Activated CD4-positive, alpha-beta memory T cell treated with anti-CD3 and anti-CD28 coated beads for 36 hours (primary cell): ENCODE measurements at regions of chr12 and their contacts with region 1.

Region 1: GRCh38 chr12:124992874-124993625 is 395 bp upstream of the BRI3BP start:
- DNase-seq: peak; percentile 94
- H3K4me3 Mint-ChIP-seq: peak overlapping the region; percentile 79
- H3K27ac Mint-ChIP-seq: peak overlapping the region; percentile 90
- H3K4me1 Mint-ChIP-seq: peaks cover 29% of the 10 kb centered on the region
- H3K27me3 Mint-ChIP-seq: no peaks in the 10 kb centered on the region

Region 2: GRCh38 chr12:124863416-124864325 is 129.4 kb before region 1 on chr12 and contains the start of gene SCARB1:
- CTCF ChIA-PET with region 1: no interaction called
- POLR2A ChIA-PET with region 1: no interaction called
- intact Hi-C with region 1: loop called (anchors 5 kb)
- DNase-seq: peak; percentile 88
- H3K4me3 Mint-ChIP-seq: peak within 1 kb of the TSS; percentile 71
- H3K27ac Mint-ChIP-seq: peak within 1 kb of the TSS; percentile 44
- H3K4me1 Mint-ChIP-seq: peaks cover 18% of the 10 kb centered on the region
- H3K27me3 Mint-ChIP-seq: peaks cover 3% of the 10 kb centered on the region
- total RNA-seq, gene SCARB1: 11.4 to 12.8 TPM

Region 3: GRCh38 chr12:124927201-124928094 is 65.6 kb before region 1 on chr12:
- CTCF ChIA-PET with region 1: no interaction called
- POLR2A ChIA-PET with region 1: no interaction called
- intact Hi-C with region 1: loop called (anchors 1 kb)
- DNase-seq: peak; percentile 97
- H3K4me3 Mint-ChIP-seq: peak overlapping the region; percentile 94
- H3K27ac Mint-ChIP-seq: peak overlapping the region; percentile 96
- H3K4me1 Mint-ChIP-seq: peaks cover 32% of the 10 kb centered on the region
- H3K27me3 Mint-ChIP-seq: peaks cover 5% of the 10 kb centered on the region

Region 4: DNA sequence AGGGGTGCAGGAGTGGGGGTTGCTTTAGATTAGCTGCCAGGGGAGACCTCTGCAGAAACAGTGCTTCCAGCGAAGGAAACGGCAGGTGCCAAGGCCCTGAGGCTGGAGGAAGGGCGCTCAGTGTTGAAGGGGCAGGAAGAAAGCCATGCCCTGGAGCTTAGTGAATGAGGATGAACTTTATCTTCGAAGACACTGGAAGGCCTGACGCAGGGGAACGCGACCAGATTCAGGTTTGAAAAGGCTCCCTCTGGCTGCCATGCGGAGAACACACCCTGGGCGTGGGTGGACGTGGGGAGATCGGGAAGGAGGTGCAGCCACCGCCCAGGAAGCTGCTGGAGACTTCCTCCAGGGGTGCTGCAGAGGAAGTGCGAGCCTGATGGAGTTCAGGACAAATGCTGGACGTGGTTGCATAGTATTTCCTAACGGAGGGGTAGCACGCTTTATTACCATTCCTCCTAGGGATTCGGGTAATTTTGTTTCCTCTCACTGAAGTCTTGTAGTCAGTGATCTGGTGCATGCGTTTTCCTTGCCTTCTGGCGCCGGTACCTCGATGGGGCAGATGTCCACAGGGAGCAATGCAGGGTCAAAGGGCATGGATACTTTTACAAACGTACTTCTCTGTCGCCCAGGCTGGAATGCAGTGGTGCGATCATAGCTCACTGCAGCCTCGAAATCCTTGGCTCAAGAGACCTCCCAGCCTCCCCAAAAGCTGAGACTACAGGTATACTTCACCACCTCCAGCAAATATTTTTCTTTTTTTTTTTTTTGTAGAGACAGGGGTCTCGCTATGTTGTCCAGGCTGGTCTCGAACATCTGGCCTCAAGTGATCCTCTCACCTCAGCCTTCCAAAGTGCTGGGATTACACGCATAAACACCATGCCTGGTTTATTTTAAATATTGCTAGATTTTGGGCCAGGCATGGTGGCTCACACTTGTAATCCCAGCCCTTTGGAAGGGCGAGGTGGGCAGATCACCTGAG is 52.2 kb before region 1 on chr12:
- CTCF ChIA-PET with region 1: interaction called, 27 read pairs
- POLR2A ChIA-PET with region 1: interaction called, 3 read pairs
- intact Hi-C with region 1: loop called (anchors 1 kb)
- DNase-seq: peak; percentile 95
- H3K4me3 Mint-ChIP-seq: no peak overlapping the region
- H3K27ac Mint-ChIP-seq: no peak overlapping the region
- H3K4me1 Mint-ChIP-seq: peaks cover 10% of the 10 kb centered on the region
- H3K27me3 Mint-ChIP-seq: no peaks in the 10 kb centered on the region

Region 5: GRCh38 chr12:124952801-124953200 is 40.2 kb before region 1 on chr12:
- CTCF ChIA-PET with region 1: no interaction called
- POLR2A ChIA-PET with region 1: no interaction called
- intact Hi-C with region 1: no loop called
- DNase-seq: no peak
- H3K4me3 Mint-ChIP-seq: no peak overlapping the region
- H3K27ac Mint-ChIP-seq: no peak overlapping the region
- H3K4me1 Mint-ChIP-seq: no peaks in the 10 kb centered on the region
- H3K27me3 Mint-ChIP-seq: no peaks in the 10 kb centered on the region

Region 6: DNA sequence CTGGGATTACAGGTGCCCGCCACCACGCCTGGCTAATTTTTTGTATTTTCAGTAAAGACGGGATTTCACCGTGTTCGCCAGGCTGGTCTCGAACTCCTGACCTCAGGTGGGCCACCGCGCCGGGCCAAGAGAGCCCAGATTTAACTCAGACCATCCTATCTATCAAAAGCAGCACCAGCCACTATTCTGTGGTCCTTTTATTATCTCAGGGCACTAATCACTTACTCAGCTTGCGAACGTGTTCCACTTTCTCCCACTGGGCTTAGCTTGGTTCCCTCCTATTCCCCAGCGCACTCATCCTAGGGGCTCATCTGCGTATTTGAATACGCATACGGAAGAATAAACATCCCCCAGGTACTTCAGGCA is 56.0 kb after region 1 on chr12:
- CTCF ChIA-PET with region 1: no interaction called
- POLR2A ChIA-PET with region 1: no interaction called
- intact Hi-C with region 1: loop called (anchors 1 kb)
- DNase-seq: no peak
- H3K4me3 Mint-ChIP-seq: peak overlapping the region; percentile 79
- H3K27ac Mint-ChIP-seq: peak overlapping the region; percentile 38
- H3K4me1 Mint-ChIP-seq: peaks cover 5% of the 10 kb centered on the region
- H3K27me3 Mint-ChIP-seq: no peaks in the 10 kb centered on the region

Region 7: DNA sequence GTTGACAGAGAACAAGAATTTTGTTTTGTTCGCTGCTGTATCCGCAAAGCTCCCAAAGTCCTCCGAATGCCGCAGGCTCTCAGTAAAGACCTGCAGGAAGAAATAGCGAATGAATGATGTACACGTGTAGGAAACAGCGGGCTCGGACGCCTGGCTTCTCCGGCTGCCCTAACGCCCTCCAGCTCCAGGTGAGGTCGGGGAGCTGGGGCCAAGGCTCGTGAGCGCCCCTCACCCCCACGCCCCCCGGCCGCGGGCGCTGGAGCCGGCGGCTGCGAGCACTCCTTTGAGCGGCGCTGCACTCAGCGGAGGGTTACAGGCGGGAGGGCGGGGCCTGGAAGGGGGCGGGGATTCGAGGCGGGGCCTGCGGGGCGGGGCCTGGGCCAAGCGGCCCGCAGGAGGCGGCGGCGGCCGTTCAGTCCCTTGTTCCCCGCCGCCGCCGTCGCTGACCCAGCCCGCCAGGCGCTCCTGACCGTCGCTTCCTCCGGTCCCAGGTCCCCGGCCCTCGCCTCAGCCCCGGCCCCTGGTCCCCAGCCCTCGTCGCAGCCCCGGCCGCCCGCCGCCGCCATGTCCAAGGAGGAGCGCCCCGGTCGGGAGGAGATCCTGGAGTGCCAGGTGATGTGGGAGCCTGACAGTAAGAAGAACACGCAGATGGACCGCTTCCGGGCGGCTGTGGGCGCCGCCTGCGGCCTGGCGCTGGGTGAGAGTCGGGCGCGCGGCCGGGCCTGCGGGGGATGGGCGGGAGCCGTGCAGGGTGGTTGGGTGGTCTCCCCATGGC is 72.2 kb after region 1 on chr12 and contains the start of gene AACS:
- CTCF ChIA-PET with region 1: no interaction called
- POLR2A ChIA-PET with region 1: interaction called, 3 read pairs
- intact Hi-C with region 1: loop called (anchors 1 kb)
- DNase-seq: peak; percentile 84
- H3K4me3 Mint-ChIP-seq: peak within 1 kb of the TSS; percentile 77
- H3K27ac Mint-ChIP-seq: no peak within 1 kb of the TSS
- H3K4me1 Mint-ChIP-seq: peaks cover 18% of the 10 kb centered on the region
- H3K27me3 Mint-ChIP-seq: peaks cover 3% of the 10 kb centered on the region
- total RNA-seq, gene AACS: 17.3 to 17.6 TPM